CD8-positive, alpha-beta T cell (primary cell): ENCODE measurements at regions of chr11 and their contacts with region 1.

Region 1: DNA sequence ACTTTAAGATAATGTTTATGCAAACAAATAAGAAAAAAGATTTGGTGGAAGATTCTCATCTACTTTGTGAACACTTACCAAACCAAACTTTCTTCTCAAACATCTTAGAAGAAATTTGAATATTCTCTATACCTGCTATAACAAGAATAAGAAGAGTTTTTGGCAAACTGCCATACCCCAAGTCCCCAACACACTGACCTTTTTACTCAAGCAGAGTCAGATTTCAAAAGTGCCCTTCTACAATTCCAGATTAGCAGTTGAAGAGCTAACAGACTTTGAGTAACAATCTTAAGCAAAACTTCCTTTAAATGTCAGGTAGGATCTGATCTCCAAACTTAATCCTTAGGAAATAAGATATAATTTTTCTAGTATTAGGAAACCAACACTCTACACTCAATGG is 33.9 kb downstream of the TSG101 start:
- DNase-seq: no peak
- ATAC-seq: no peak
- H3K4me3 ChIP-seq: no peak overlapping the region
- H3K4me3 Mint-ChIP-seq: no peak overlapping the region
- H3K27ac ChIP-seq: no peak overlapping the region
- H3K27ac Mint-ChIP-seq: peak overlapping the region; percentile 32
- H3K4me1 ChIP-seq: no peaks in the 10 kb centered on the region
- H3K4me1 Mint-ChIP-seq: peaks cover 7% of the 10 kb centered on the region
- H3K27me3 ChIP-seq: no peaks in the 10 kb centered on the region
- H3K27me3 Mint-ChIP-seq: no peaks in the 10 kb centered on the region
- CTCF ChIP-seq: no peak

Region 2: DNA sequence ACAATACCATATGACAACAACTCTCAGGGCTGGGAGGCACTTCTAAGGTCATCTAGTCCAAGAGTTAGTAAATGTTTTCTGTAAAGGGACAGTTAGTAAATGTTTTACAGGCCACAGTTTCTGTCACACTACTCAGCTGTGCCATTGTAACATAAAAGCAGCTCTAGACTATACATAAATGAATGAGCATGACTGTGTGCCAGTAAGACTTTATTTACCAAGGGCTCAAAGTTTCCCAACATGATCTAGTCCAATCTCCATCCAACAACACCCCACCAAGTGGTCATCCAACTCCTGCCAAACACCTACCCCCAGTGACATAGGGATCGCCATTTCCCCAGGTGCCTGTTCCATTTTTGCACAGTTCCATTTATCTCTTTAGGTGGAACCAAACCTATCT is 492.1 kb before region 1 on chr11:
- CTCF ChIA-PET with region 1: no interaction called
- POLR2A ChIA-PET with region 1: no interaction called
- intact Hi-C with region 1: loop called in 1 of 2 experiments (anchors 10 kb)
- DNase-seq: no peak
- ATAC-seq: no peak
- H3K4me3 ChIP-seq: no peak overlapping the region
- H3K4me3 Mint-ChIP-seq: no peak overlapping the region
- H3K27ac ChIP-seq: no peak overlapping the region
- H3K27ac Mint-ChIP-seq: peak overlapping the region; percentile 6
- H3K4me1 ChIP-seq: no peaks in the 10 kb centered on the region
- H3K4me1 Mint-ChIP-seq: peaks cover 6% of the 10 kb centered on the region
- H3K27me3 ChIP-seq: no peaks in the 10 kb centered on the region
- H3K27me3 Mint-ChIP-seq: no peaks in the 10 kb centered on the region
- CTCF ChIP-seq: no peak